Dorsolateral prefrontal cortex (tissue), 120 donors: ENCODE measurements at regions of chr1 and their contacts with region 1.

Region 1: DNA sequence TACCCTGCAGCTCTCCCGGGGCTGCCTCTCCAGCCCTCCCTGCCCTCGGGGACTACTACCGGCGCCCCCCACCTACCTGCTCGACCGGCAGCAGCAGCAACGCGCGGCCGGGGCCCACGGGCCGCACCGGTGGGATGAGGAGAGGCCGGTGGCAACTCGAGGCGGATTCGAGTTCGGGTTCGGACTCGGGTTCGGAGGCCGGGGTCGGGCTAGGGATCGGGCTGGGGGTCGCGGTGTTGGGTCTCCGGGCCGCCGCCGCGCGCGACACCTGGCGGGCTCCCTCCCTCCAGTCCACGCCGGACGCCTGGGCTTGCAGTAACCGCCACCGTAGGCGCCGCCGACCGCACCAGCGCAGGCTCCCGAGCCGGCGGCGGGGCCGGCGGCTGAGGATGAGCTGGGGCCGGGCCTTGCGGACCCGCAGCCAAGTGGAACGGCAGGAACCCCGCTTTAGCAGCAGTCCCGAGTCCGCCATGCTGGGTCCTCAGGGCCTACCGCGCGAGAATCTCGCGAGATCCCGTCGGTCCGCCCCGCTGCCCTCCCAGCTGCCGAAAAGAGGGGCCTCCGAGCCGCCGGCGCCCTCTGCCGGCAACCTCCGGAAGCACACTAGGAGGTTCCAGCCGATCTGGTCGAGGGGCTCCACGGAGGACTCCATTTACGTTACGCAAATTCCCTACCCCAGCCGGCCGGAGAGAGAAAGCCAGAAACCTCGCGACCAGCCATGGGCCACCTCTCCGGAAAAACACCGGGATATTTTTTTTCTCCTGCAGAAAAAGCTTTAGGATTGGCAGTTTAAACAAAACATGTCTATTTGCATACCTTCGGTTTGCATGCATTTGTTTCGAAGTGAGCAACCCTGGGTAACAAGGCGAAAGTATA is at the start of gene NOL9:
- DNase-seq: peak; percentile 85 to 95 (median 92)
- H3K4me3 ChIP-seq: peak within 1 kb of the TSS; percentile 70 to 100 (median 95)
- H3K27ac ChIP-seq: peak within 1 kb of the TSS in 55 of 59 donors; percentile 1 to 90 (median 75)
- H3K27me3 ChIP-seq: no peaks in the 10 kb centered on the region
- CTCF ChIP-seq: peak; percentile 93 to 100 (median 98)
- total RNA-seq, gene NOL9: 24.8 to 48.9 (median 33.6) TPM

Region 2: DNA sequence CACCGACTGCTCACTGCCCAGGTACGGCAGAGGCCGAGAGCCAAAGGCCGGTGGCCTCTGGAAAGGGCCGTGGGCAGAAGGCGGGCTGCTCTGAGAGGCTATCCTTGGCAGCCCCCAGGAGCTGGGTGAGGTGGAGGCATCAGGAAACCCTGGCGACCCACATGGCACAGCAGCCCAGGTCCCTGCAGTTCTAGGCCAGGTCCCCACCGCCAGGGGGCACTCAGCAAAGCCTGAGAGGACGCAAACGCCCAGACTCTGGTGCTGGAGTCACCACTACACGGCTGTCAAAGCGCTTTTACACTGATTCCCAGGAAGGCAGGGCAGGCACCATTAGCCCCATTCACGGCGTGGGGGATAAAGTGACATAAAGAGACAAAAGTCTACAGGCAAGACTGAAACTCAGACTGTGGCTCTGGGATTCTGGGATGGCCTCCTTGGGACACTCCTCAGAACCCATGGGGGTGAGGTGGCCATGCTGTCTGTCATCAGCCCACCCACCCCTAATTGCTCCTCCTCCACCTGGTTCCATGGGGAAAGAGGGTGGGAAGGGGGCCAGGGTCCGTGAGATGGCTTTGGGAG is 67.7 kb before region 1 on chr1:
- intact Hi-C with region 1: no loop called
- DNase-seq: peak; percentile 68 to 92 (median 82)
- H3K4me3 ChIP-seq: peak overlapping the region in 30 of 59 donors; percentile 11 to 62 (median 48)
- H3K27ac ChIP-seq: peak overlapping the region in 1 of 59 donors; percentile 92
- H3K27me3 ChIP-seq: peaks cover 0 to 22% (median 4%) of the 10 kb centered on the region in 45 donors
- CTCF ChIP-seq: peak; percentile 50 to 90 (median 83)

Region 3: DNA sequence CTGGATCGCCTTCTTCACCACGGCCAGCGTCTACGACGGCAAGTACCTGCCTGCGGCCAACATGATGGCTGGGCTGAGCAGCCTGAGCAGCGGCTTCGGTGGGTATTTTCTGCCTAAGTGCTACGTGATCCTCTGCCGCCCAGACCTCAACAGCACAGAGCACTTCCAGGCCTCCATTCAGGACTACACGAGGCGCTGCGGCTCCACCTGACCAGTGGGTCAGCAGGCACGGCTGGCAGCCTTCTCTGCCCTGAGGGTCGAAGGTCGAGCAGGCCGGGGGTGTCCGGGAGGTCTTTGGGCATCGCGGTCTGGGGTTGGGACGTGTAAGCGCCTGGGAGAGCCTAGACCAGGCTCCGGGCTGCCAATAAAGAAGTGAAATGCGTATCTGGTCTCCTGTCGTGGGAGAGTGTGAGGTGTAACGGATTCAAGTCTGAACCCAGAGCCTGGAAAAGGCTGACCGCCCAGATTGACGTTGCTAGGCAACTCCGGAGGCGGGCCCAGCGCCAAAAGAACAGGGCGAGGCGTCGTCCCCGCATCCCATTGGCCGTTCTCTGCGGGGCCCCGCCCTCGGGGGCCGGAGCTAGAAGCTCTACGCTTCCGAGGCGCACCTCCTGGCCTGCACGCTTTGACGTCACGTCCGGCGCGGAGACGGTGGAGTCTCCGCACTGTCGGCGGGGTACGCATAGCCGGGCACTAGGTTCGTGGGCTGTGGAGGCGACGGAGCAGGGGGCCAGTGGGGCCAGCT is 25.3 kb after region 1 on chr1 and contains the start of gene ZBTB48:
- intact Hi-C with region 1: loop called (anchors 1 kb)
- DNase-seq: peak; percentile 98 to 100 (median 100)
- H3K4me3 ChIP-seq: peak within 1 kb of the TSS; percentile 66 to 99 (median 91)
- H3K27ac ChIP-seq: peak within 1 kb of the TSS; percentile 39 to 97 (median 90)
- H3K27me3 ChIP-seq: no peaks in the 10 kb centered on the region
- CTCF ChIP-seq: peak in 21 of 56 donors; percentile 3 to 44 (median 21)
- total RNA-seq, gene ZBTB48: 19.2 to 51.0 (median 30.1) TPM

Region 4: GRCh38 chr1:6602669-6603237 is 48.5 kb after region 1 on chr1 and contains the start of gene KLHL21:
- intact Hi-C with region 1: loop called in 1 of 2 experiments (anchors 5 kb)
- DNase-seq: peak; percentile 70 to 96 (median 87)
- H3K4me3 ChIP-seq: peak within 1 kb of the TSS; percentile 58 to 99 (median 91)
- H3K27ac ChIP-seq: peak within 1 kb of the TSS; percentile 91 to 100 (median 98)
- H3K27me3 ChIP-seq: no peaks in the 10 kb centered on the region
- CTCF ChIP-seq: peak in 9 of 56 donors; percentile 2 to 30 (median 17)
- total RNA-seq, gene KLHL21: 36.4 to 92.8 (median 52.5) TPM

Region 5: DNA sequence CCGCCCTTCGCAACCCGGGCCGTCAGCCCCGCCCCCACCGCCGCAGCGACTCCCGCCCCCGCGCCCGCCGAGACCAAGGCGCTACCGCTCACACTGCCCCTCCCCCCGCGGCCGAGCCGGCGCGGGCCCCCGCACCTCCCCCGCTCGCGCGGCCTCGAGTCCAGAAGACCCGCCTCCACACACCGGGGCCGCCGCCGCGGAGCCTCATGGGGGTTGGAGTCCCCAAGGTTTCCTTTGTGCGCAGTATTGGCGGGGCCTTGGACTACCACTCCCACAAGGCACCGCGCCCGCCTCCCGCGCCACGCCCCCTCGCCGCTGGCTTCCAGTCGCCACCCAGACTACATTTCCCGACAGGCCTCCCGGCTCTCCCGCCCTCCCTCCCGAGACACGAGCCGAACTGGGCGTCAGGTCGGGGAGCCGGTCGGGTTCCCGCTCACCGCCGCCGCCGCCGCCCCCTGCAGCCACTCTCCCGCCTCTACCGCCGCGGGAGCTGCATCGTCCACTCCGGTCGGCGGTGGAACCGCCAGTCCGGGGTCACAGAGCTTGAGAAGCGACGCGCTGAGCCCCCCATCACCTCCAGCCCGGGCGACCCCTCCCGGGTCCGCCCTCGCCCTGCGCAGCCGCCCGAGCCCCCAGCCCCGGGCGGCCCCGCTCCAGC is 59.2 kb after region 1 on chr1 and contains the start of gene PHF13:
- intact Hi-C with region 1: loop called in 1 of 2 experiments (anchors 1 kb)
- DNase-seq: peak; percentile 98 to 100 (median 99)
- H3K4me3 ChIP-seq: peak within 1 kb of the TSS; percentile 58 to 98 (median 89)
- H3K27ac ChIP-seq: peak within 1 kb of the TSS; percentile 60 to 99 (median 96)
- H3K27me3 ChIP-seq: no peaks in the 10 kb centered on the region
- CTCF ChIP-seq: peak in 10 of 56 donors; percentile 3 to 33 (median 20)
- total RNA-seq, gene PHF13: 9.4 to 21.9 (median 13.0) TPM

Region 6: DNA sequence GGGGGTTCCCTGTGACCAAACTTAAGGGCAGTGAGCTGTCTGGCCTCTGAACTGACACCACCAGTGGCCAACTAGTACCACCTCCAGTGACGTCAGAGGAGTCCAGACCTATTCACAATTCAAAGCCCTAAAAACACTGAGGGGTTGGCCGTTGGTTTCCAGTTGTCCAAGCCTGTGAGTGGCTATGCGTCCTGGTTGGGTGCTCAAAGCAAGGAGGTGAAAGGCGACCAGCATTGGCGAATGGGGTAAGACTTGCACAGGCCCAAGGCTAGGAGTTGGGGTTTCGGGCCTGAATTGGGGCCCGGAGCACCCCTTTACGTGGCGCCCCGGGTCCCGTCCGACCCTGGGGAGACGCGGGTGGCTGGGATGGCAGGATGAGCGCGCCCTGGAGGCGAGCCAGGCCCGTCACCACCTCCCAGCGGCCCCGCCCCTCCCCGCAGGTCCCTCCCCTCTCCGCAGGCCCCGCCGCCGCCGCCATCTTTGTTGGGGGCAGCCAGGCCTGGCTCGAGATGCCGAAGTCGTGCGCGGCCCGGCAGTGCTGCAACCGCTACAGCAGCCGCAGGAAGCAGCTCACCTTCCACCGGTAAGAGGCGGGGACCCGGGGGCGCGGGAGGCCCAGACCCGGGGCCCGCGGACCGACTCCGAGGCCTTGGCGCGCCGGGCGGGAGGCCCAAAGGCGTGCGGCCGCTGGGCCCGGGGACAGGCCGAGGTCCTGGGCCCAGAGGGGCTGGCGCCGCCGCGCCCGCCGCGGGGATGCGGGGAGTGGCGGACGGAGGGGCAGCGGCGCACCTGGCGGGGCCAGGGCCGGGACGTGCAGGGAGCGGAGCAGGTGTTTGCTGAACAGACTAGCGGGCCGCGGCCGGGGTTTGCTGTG is 70.7 kb after region 1 on chr1 and contains the start of gene THAP3:
- intact Hi-C with region 1: loop called (anchors 5 kb)
- DNase-seq: peak; percentile 65 to 90 (median 81)
- H3K4me3 ChIP-seq: peak within 1 kb of the TSS; percentile 64 to 97 (median 86)
- H3K27ac ChIP-seq: peak within 1 kb of the TSS; percentile 38 to 95 (median 88)
- H3K27me3 ChIP-seq: no peaks in the 10 kb centered on the region
- CTCF ChIP-seq: peak in 22 of 56 donors; percentile 7 to 50 (median 22)
- total RNA-seq, gene THAP3: 15.9 to 40.5 (median 24.6) TPM

Region 7: GRCh38 chr1:6701437-6702153 is 147.3 kb after region 1 on chr1 and contains the start of gene DNAJC11:
- intact Hi-C with region 1: loop called (anchors 2 to 5 kb)
- DNase-seq: peak; percentile 80 to 94 (median 88)
- H3K4me3 ChIP-seq: peak within 1 kb of the TSS; percentile 67 to 100 (median 98)
- H3K27ac ChIP-seq: peak within 1 kb of the TSS in 57 of 59 donors; percentile 41 to 92 (median 79)
- H3K27me3 ChIP-seq: no peaks in the 10 kb centered on the region
- CTCF ChIP-seq: peak; percentile 39 to 100 (median 86)
- total RNA-seq, gene DNAJC11: 42.4 to 78.3 (median 59.8) TPM

Region 8: GRCh38 chr1:6842301-6842700 is 288.0 kb after region 1 on chr1:
- intact Hi-C with region 1: no loop called
- DNase-seq: no peak
- H3K4me3 ChIP-seq: no peak overlapping the region
- H3K27ac ChIP-seq: peak overlapping the region in 1 of 59 donors; percentile 35
- H3K27me3 ChIP-seq: no peaks in the 10 kb centered on the region
- CTCF ChIP-seq: no peak